GM12878 (cell line): ENCODE measurements at regions of chr19 and their contacts with region 1.

Region 1: GRCh38 chr19:48582168-48582567 is 24.4 kb upstream of the SPACA4 start:
- DNase-seq: no peak
- ATAC-seq: no peak
- H3K4me3 ChIP-seq: no peak overlapping the region
- H3K27ac ChIP-seq: no peak overlapping the region
- H3K4me1 ChIP-seq: peaks cover 4% of the 10 kb centered on the region
- H3K27me3 ChIP-seq: no peaks in the 10 kb centered on the region
- CTCF ChIP-seq: no peak
- EP300 ChIP-seq: no peak
- POLR2A ChIP-seq: no peak
- RAD21 ChIP-seq: no peak

Region 2: DNA sequence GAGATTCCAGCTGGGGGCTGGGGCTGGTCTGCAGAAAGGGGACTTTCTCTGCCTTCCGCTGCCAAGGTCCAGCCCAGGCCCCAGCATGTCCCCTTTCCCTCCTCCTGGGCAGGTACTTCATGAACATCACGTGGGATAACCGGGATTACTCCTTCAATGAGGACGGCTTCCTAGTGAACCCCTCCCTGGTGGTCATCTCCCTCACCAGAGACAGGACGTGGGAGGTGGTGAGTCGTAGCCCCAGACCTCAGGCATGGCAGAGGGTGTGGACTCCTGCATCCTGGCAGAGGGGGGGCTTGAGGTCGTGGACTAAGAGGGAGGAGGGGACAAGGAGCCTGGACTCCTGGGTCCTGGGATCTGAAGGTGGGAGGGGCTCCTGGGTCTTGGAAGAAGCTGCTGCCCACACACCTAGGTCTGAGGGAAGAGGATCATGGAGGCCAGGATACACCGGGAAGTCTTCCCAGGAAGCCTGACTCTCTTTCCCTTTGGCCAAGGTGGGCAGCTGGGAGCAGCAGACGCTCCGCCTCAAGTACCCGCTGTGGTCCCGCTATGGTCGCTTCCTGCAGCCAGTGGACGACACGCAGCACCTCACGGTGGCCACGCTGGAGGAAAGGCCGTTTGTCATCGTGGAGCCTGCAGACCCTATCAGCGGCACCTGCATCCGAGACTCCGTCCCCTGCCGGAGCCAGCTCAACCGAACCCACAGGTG is 168.1 kb before region 1 on chr19:
- CTCF ChIA-PET with region 1: no interaction called
- POLR2A ChIA-PET with region 1: no interaction called
- RAD21 ChIA-PET with region 1: no interaction called
- SMC1A ChIA-PET with region 1: no interaction called
- in situ Hi-C with region 1: no loop called
- intact Hi-C with region 1: no loop called
- DNase-seq: no peak
- ATAC-seq: no peak
- H3K4me3 ChIP-seq: no peak overlapping the region
- H3K27ac ChIP-seq: no peak overlapping the region
- H3K4me1 ChIP-seq: peaks cover 8% of the 10 kb centered on the region
- H3K27me3 ChIP-seq: no peaks in the 10 kb centered on the region; a peak in 1 of 4 replicates
- CTCF ChIP-seq: no peak
- EP300 ChIP-seq: no peak
- POLR2A ChIP-seq: no peak
- RAD21 ChIP-seq: no peak

Region 3: GRCh38 chr19:48506138-48506733 is 75.9 kb before region 1 on chr19:
- CTCF ChIA-PET with region 1: interaction called, 131 read pairs
- POLR2A ChIA-PET with region 1: interaction called, 7 read pairs
- RAD21 ChIA-PET with region 1: interaction called, 69 read pairs
- SMC1A ChIA-PET with region 1: interaction called, 68 read pairs
- in situ Hi-C with region 1: loop called (anchors 5 kb)
- intact Hi-C with region 1: loop called (anchors 1 kb)
- DNase-seq: no peak
- ATAC-seq: peak; percentile 21
- H3K4me3 ChIP-seq: no peak overlapping the region
- H3K27ac ChIP-seq: no peak overlapping the region
- H3K4me1 ChIP-seq: peaks cover under 1% of the 10 kb centered on the region; the same call in 1 of the 2 replicates
- H3K27me3 ChIP-seq: no peaks in the 10 kb centered on the region; a peak in 1 of 4 replicates
- CTCF ChIP-seq: peak; percentile 39 to 57 (median 54)
- EP300 ChIP-seq: no peak
- POLR2A ChIP-seq: no peak
- RAD21 ChIP-seq: peak; percentile 83

Region 4: GRCh38 chr19:48513289-48514122 is 68.7 kb before region 1 on chr19:
- CTCF ChIA-PET with region 1: interaction called, 131 read pairs
- POLR2A ChIA-PET with region 1: no interaction called
- RAD21 ChIA-PET with region 1: interaction called, 69 read pairs
- SMC1A ChIA-PET with region 1: interaction called, 68 read pairs
- in situ Hi-C with region 1: loop called (anchors 5 kb)
- intact Hi-C with region 1: no loop called
- DNase-seq: no peak
- ATAC-seq: peak; percentile 96
- H3K4me3 ChIP-seq: peak overlapping the region; percentile 93
- H3K27ac ChIP-seq: no peak overlapping the region
- H3K4me1 ChIP-seq: peaks cover 18% of the 10 kb centered on the region
- H3K27me3 ChIP-seq: peaks cover 2 to 4% of the 10 kb centered on the region in 2 experiments; a peak in 3 of 4 replicates
- CTCF ChIP-seq: no peak
- EP300 ChIP-seq: no peak
- POLR2A ChIP-seq: no peak; the same call in 1 of the 2 replicates
- RAD21 ChIP-seq: no peak

Region 5: DNA sequence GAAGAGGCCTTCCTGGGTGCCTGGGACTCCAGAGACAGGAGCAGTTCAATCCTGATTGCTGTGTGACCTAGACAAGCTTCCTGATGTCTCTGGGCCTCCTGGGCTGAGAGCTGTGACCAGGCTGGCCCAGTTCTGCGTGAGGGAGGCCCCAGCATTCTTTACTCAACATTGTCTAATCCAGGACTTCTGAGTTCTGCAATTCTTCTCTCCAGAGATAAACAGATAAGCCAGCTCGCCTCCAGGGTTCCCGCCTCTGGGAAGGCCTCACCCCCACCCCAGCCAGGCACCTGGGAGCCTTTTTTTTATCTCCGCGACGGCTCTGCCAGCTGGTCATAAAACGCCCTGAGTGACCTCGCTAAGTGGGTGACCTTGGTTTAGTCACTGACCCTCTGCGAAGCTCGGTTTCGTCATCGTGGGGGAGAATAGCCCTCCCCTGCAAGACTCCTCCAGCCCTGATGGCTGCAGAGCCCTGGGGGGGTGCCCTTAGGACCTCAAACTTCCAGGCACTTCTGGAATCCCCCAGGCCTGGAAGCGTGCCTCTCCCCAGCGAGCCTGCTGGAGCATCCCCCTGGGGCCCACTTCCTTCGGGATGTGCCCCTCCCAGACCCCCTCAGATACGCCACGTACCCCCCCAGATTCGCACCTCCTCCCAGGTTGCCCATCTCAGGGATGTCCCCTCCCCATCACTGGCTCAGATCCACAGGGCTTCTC is 28.3 kb before region 1 on chr19:
- CTCF ChIA-PET with region 1: no interaction called
- POLR2A ChIA-PET with region 1: no interaction called
- RAD21 ChIA-PET with region 1: no interaction called
- SMC1A ChIA-PET with region 1: no interaction called
- in situ Hi-C with region 1: no loop called
- intact Hi-C with region 1: no loop called
- DNase-seq: no peak
- ATAC-seq: no peak
- H3K4me3 ChIP-seq: no peak overlapping the region
- H3K27ac ChIP-seq: no peak overlapping the region
- H3K4me1 ChIP-seq: no peaks in the 10 kb centered on the region
- H3K27me3 ChIP-seq: no peaks in the 10 kb centered on the region; a peak in 1 of 4 replicates
- CTCF ChIP-seq: no peak
- EP300 ChIP-seq: no peak
- POLR2A ChIP-seq: no peak
- RAD21 ChIP-seq: no peak